ENCODE measurements at regions of chr17 and their contacts with region 1.

Region 1: GRCh38 chr17:38982858-38983746 is 15.9 kb upstream of the FBXO47 start:
- DNase-seq: peak; percentile 68
- H3K4me3 Mint-ChIP-seq: no peak overlapping the region
- H3K27ac Mint-ChIP-seq: no peak overlapping the region
- H3K4me1 Mint-ChIP-seq: no peaks in the 10 kb centered on the region
- H3K27me3 Mint-ChIP-seq: no peaks in the 10 kb centered on the region
- CTCF ChIP-seq: peak; percentile 92

Region 2: GRCh38 chr17:39069114-39069756 is 86.1 kb after region 1 on chr17:
- CTCF ChIA-PET with region 1: interaction called, 26 read pairs
- POLR2A ChIA-PET with region 1: no interaction called
- intact Hi-C with region 1: loop called (anchors 1 kb)
- DNase-seq: peak; percentile 55
- H3K4me3 Mint-ChIP-seq: no peak overlapping the region
- H3K27ac Mint-ChIP-seq: no peak overlapping the region
- H3K4me1 Mint-ChIP-seq: peaks cover 10% of the 10 kb centered on the region
- H3K27me3 Mint-ChIP-seq: peaks cover 10% of the 10 kb centered on the region
- CTCF ChIP-seq: peak; percentile 49

Region 3: DNA sequence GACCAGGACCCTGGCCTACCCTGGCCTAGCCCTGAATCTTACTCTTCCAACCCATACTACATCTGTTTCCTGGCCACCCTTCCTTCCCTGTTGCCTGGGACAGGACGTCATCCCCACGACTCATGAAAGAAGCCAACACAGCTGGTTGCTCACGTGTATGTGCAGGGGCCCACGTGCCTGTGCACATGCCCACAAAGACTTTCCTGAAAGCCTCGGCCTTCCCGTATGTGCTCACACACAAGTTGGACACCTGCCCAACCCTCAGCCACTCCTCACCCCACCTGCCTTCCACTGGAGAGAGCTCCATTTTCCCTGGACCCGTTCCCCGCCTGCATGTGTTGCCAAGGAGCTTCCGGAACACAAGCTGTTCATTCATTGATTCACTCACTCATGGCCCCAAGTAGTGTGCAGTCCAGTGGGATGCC is 161.3 kb after region 1 on chr17:
- CTCF ChIA-PET with region 1: interaction called, 14 read pairs
- POLR2A ChIA-PET with region 1: interaction called, 5 read pairs
- intact Hi-C with region 1: no loop called
- DNase-seq: peak; percentile 95
- H3K4me3 Mint-ChIP-seq: no peak overlapping the region
- H3K27ac Mint-ChIP-seq: peak overlapping the region; percentile 86
- H3K4me1 Mint-ChIP-seq: peaks cover 26% of the 10 kb centered on the region
- H3K27me3 Mint-ChIP-seq: no peaks in the 10 kb centered on the region
- CTCF ChIP-seq: no peak

Measured in MCF 10A (cell line).